IMR-90 (cell line): ENCODE measurements at regions of chr10 and their contacts with region 1.

Region 1: DNA sequence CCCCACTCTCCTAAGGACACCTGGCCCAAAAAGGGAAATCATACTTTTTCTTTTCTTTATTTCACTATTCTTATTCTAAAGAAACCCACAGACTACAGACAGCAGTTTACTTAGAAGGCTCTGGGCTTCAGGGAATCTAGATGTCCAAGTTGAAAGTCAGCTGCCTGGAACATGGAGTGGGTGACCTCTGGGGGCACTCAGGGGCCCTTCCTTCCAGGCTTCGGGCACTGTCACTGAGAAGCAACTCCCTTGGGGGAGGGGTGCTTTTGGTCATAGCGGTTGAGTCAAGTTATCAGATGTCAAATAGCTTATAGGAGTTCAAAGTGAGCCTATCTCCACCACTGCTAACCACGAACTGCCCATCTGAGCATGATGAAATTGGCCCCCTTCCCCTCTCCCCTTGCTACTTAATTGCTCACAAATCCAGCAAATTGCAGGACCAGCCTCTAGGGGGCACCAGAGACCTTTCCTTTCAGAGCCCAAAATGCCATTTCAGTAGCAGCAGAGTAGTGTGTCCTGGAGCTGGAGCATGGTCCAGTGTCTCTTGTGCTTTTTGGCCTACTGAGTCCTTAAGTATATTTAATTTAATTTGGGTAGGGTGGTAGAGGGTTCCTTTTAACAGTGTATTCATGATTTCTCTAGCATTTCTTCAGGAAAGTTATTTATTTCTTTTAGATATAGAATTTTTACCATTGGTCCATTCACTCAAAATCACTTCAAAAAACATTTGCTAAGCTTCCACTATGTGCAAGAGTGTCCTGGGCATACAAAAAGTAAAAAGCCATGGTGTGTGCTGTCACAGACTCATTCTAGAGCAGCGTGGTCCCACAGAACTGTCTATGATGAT is 463.8 kb downstream of the KCNMA1 start:
- DNase-seq: peak; percentile 79
- ATAC-seq: peak; percentile 93
- H3K4me3 ChIP-seq: no peak overlapping the region
- H3K27ac ChIP-seq: no peak overlapping the region
- H3K4me1 ChIP-seq: no peaks in the 10 kb centered on the region; the same call in 1 of the 2 replicates
- H3K27me3 ChIP-seq: no peaks in the 10 kb centered on the region
- CTCF ChIP-seq: peak; percentile 96
- POLR2A ChIP-seq: 0 out of 2 replicates have a peak, but pooled peaks have one; percentile 36
- RAD21 ChIP-seq: peak; percentile 96

Region 2: DNA sequence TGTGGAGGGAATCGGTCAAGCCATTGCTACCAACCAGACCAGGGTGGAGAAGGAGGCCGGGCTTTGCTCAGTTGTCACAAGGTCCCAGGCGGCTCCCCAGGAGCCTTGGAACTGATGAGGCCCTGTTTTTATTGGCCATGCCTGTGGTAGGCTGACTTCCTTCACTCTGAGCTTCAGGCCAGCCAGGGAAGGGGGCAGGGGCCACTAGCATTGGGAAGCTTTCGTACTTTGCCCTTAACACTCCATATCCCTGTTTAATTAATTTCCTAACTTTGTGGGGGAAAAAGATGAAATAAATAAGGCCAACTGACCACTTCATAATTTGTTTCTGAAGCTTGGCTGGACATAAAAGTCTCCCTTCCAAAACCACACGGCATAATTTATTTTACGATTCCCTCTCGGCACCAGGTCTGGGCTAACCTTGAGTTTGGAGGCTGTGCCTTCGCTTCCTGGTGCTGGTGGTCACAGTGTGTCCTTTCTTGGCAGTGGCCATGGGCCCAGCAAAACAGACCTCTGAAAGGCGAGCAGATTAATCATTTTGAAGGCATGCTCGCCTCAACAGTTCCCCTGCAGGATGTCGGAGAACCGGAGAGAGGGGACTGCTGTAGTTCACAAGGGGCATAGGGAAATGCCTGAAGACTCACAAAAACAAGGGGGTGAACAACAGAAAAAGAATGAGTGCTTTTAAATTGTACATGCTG is 776.5 kb before region 1 on chr10:
- CTCF ChIA-PET with region 1: no interaction called
- POLR2A ChIA-PET with region 1: no interaction called
- dilution Hi-C with region 1: no loop called
- in situ Hi-C with region 1: no loop called
- intact Hi-C with region 1: no loop called
- DNase-seq: no peak
- ATAC-seq: no peak
- H3K4me3 ChIP-seq: no peak overlapping the region
- H3K27ac ChIP-seq: no peak overlapping the region
- H3K4me1 ChIP-seq: peaks cover 5% of the 10 kb centered on the region; the same call in 1 of the 2 replicates
- H3K27me3 ChIP-seq: no peaks in the 10 kb centered on the region
- CTCF ChIP-seq: no peak
- POLR2A ChIP-seq: no peak
- RAD21 ChIP-seq: no peak

Region 3: GRCh38 chr10:77428691-77429395 is 255.0 kb after region 1 on chr10:
- CTCF ChIA-PET with region 1: no interaction called
- POLR2A ChIA-PET with region 1: no interaction called
- dilution Hi-C with region 1: no loop called
- in situ Hi-C with region 1: no loop called
- intact Hi-C with region 1: loop called (anchors 10 kb)
- DNase-seq: peak; percentile 82
- ATAC-seq: peak; percentile 89
- H3K4me3 ChIP-seq: no peak overlapping the region
- H3K27ac ChIP-seq: no peak overlapping the region
- H3K4me1 ChIP-seq: 0 out of 2 replicates have a peak, but pooled peaks cover 2% of the 10 kb centered on the region
- H3K27me3 ChIP-seq: no peaks in the 10 kb centered on the region
- CTCF ChIP-seq: peak; percentile 83
- POLR2A ChIP-seq: no peak
- RAD21 ChIP-seq: peak; percentile 72

Region 4: DNA sequence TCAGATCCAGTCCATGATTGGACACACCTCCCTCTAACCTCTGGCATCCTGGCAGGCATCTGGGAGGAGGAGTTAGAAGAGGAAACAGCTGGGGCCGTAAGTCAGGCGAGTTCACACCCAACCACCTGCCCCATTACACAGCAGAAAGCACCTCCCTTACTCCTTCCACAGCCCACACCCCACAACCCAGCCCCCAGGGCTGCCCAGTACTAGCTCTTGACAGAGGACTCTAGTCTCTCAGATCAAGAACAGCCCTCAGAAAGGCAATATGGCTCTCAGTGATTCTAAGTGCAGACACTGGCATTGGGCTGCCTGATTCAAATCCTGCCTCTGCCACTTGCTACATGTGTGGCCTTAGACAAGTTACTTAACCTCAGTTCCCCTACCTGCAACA is 429.7 kb after region 1 on chr10:
- CTCF ChIA-PET with region 1: no interaction called
- POLR2A ChIA-PET with region 1: no interaction called
- dilution Hi-C with region 1: no loop called
- in situ Hi-C with region 1: no loop called
- intact Hi-C with region 1: loop called (anchors 1 kb)
- DNase-seq: peak; percentile 44
- ATAC-seq: peak; percentile 9
- H3K4me3 ChIP-seq: no peak overlapping the region
- H3K27ac ChIP-seq: no peak overlapping the region
- H3K4me1 ChIP-seq: peaks cover 27% of the 10 kb centered on the region
- H3K27me3 ChIP-seq: no peaks in the 10 kb centered on the region
- CTCF ChIP-seq: no peak
- POLR2A ChIP-seq: no peak
- RAD21 ChIP-seq: no peak

Region 5: GRCh38 chr10:77756319-77757232 is 582.7 kb after region 1 on chr10:
- CTCF ChIA-PET with region 1: interaction called, 3 read pairs
- POLR2A ChIA-PET with region 1: no interaction called
- dilution Hi-C with region 1: no loop called
- in situ Hi-C with region 1: no loop called
- intact Hi-C with region 1: loop called (anchors 2 kb)
- DNase-seq: peak; percentile 74
- ATAC-seq: peak; percentile 97
- H3K4me3 ChIP-seq: no peak overlapping the region
- H3K27ac ChIP-seq: no peak overlapping the region
- H3K4me1 ChIP-seq: no peaks in the 10 kb centered on the region
- H3K27me3 ChIP-seq: no peaks in the 10 kb centered on the region
- CTCF ChIP-seq: peak; percentile 93
- POLR2A ChIP-seq: 0 out of 2 replicates have a peak, but pooled peaks have one; percentile 35
- RAD21 ChIP-seq: peak; percentile 93